Ovary (tissue), 10 donors: ENCODE measurements at regions of chr22 and their contacts with region 1.

Region 1: GRCh38 chr22:35033635-35034296 is 32.2 kb upstream of the ISX start:
- DNase-seq: no peak
- H3K4me3 ChIP-seq: no peak overlapping the region
- H3K27ac ChIP-seq: no peak overlapping the region
- H3K4me1 ChIP-seq: no peaks in the 10 kb centered on the region
- H3K27me3 ChIP-seq: no peaks in the 10 kb centered on the region
- CTCF ChIP-seq: no peak
- EP300 ChIP-seq: no peak
- POLR2A ChIP-seq: no peak

Region 2: GRCh38 chr22:36649066-36649465 is 1615.3 kb after region 1 on chr22:
- intact Hi-C with region 1: loop called in 1 of 4 experiments (anchors 5 kb)
- DNase-seq: no peak
- H3K4me3 ChIP-seq: no peak overlapping the region
- H3K27ac ChIP-seq: no peak overlapping the region
- H3K4me1 ChIP-seq: no peaks in the 10 kb centered on the region
- H3K27me3 ChIP-seq: no peaks in the 10 kb centered on the region
- CTCF ChIP-seq: no peak
- EP300 ChIP-seq: no peak
- POLR2A ChIP-seq: no peak